GM10248 (cell line): ENCODE measurements at regions of chr1 and their contacts with region 1.

Region 1: DNA sequence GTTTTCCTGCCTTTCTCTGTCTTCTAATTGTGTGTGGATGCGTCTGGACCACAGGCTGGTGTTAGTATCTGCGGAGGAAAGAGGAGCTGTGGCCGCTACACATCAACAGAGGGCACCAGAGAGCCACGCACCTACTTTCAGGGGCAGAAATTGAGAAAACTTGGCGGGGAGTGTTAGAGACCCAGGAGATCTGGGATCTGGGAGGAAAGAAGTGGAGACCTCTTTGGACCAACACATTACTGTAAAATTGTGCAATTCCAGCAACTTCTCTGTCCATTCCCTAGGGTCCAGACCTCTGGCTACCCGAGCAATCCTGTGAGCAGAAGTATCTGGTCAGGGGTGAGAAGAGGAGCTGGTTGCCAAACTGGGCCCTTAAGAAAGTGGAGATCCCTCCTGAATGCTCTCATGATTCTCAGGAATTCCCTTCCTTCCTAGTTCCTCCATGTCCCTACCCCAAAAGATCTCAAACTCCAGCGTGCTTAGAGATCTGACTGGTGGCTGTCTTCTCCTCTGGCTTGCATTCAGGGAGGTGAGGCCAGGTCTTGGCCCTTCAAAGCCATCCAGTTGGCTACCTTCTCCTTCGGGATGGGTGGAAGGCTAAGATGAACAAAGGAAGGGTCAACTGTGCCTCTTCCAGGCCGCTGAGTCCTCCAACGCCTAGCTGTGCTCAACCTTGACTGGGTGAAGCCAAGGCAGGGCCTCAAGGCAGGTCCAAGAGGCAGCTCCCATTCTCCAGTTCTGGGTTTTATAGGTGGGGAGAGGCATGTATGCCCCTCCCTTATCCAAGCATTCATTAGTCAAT is 1.2 kb upstream of the KIRREL1 start:
- DNase-seq: peak; percentile 70
- CTCF ChIP-seq: peak; percentile 88

Region 2: DNA sequence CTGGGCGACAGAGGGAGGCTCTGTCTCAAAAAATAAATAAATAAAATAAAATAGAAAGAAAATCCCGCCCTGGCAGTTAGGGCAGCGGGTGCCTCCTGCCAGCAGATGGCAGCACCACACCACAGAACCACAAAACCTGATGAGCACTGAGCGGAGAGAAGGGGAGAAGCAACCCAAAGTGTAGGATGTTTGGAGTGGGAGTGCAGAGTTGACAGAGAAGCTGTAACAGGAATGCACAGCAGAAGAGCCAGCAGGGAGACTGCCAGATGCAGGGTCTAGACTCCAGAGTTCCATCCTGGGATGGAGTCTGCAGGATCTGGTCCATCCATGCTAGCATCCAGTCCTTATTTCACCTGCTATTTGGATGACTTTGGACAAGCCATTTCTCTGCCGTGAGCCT is 28.5 kb before region 1 on chr1:
- CTCF ChIA-PET with region 1: interaction called, 24 read pairs
- POLR2A ChIA-PET with region 1: no interaction called
- DNase-seq: peak; percentile 65
- CTCF ChIP-seq: peak; percentile 85

Region 3: GRCh38 chr1:157978586-157979403 is 13.4 kb before region 1 on chr1:
- CTCF ChIA-PET with region 1: interaction called, 14 read pairs
- POLR2A ChIA-PET with region 1: no interaction called
- DNase-seq: no peak
- CTCF ChIP-seq: no peak

Region 4: DNA sequence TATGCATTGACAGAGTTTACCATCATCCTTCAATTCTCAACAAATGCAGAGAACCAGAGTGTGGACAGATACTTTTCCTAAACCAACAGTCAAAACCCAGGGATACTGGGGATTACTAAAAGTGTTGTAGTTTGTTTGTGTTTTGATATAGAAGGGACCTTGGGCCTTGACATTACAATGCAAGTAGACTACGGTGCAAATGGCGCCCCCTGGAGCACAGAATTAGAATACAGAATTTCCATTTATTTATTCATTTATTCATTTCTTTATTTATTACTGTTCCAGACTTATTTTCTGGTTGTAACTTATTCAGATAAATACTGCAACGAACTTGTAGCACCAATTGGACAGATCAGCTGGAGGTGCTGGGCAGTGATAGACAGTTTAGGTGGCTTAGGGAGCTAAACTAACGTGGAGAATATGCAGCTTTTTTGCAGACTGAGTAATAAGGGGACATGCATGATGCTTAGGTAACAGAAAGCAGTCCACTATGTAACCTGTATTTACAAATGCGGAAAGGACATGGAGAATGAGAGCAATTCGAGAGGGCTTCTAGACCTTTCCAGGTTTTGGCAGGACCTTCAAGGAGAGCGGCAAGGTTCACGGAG is 43.8 kb after region 1 on chr1:
- CTCF ChIA-PET with region 1: interaction called, 24 read pairs
- POLR2A ChIA-PET with region 1: no interaction called
- DNase-seq: no peak
- CTCF ChIP-seq: peak; percentile 54

Region 5: GRCh38 chr1:158124999-158125398 is 132.8 kb after region 1 on chr1:
- CTCF ChIA-PET with region 1: interaction called, 39 read pairs
- POLR2A ChIA-PET with region 1: no interaction called
- DNase-seq: peak; percentile 80
- CTCF ChIP-seq: peak; percentile 96